ENCODE measurements at regions of chr16 and their contacts with region 1.

Region 1: DNA sequence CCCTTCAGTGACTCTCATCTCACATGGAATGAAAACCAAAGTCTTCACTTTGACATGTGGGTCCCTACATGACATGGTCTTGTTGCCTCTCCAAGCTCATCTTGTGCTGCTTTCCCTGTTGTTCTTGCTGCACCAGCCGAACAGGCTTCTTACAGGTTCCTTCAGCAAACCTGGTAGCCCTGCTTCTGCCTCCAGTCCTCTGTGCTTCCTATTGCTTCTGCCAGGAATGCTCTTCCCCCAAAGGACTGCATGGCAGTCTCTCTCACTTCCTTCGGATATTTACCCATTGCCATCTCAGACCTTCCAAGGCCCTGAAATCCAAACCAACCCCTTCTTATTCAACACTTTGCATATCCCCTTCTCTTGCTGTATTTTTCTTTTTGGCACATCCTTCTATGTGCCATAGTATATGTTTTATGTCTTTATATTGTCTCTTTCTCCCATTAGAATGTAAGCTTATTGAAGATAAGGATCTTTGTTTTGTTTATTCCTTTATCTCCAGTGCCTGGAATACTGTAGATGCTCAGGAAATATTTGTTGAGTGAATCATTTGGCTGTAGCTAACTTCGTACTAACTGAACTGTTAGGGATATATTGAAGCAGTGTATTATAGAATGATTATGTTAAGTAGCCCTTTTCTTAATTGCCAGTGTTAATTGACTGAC is 57.9 kb upstream of the SLC12A3 start:
- DNase-seq: no peak
- ATAC-seq: no peak
- H3K4me3 ChIP-seq: no peak overlapping the region
- H3K27ac ChIP-seq: no peak overlapping the region
- H3K4me1 ChIP-seq: no peaks in the 10 kb centered on the region
- H3K27me3 ChIP-seq: no peaks in the 10 kb centered on the region
- CTCF ChIP-seq: no peak
- POLR2A ChIP-seq: no peak

Region 2: GRCh38 chr16:56013962-56014552 is 793.1 kb before region 1 on chr16:
- intact Hi-C with region 1: loop called in 1 of 10 experiments (anchors 10 kb)
- DNase-seq: peak; percentile 21 to 75 (median 57)
- ATAC-seq: peak in 2 of 4 donors; percentile 56 to 72
- H3K4me3 ChIP-seq: no peak overlapping the region
- H3K27ac ChIP-seq: no peak overlapping the region
- H3K4me1 ChIP-seq: no peaks in the 10 kb centered on the region
- H3K27me3 ChIP-seq: peaks cover 0 to 4% (median 0%) of the 10 kb centered on the region in 9 donors
- CTCF ChIP-seq: no peak
- POLR2A ChIP-seq: no peak

Region 3: DNA sequence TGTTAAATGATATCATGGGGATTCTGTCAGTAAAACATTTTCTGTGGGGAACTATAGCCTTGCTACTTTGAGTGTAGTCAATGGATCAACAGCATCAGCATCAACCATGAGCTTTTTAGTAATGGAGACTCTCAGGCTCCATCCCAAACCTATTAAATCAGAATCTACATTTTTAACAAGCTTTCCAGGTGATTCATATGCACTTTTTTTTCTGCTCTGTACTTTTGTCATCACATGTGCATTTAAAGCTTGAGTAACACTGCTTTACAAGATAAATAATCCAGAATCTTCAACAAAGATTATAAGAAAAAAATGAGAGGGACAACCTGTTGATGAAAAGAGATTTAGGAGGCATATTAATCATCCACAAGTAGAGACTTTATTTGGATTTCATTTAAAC is 53.7 kb before region 1 on chr16:
- intact Hi-C with region 1: no loop called
- DNase-seq: no peak
- ATAC-seq: no peak
- H3K4me3 ChIP-seq: no peak overlapping the region
- H3K27ac ChIP-seq: no peak overlapping the region
- H3K4me1 ChIP-seq: peaks cover 0 to 14% (median 3%) of the 10 kb centered on the region in 12 donors
- H3K27me3 ChIP-seq: no peaks in the 10 kb centered on the region
- CTCF ChIP-seq: no peak
- POLR2A ChIP-seq: no peak